GM12878 (cell line): ENCODE measurements at regions of chr5 and their contacts with region 1.

Region 1: GRCh38 chr5:88729084-88729828 is 153.7 kb downstream of the MEF2C start:
- DNase-seq: peak; percentile 73
- ATAC-seq: peak; percentile 46
- H3K4me3 ChIP-seq: no peak overlapping the region
- H3K27ac ChIP-seq: no peak overlapping the region
- H3K4me1 ChIP-seq: peaks cover 34% of the 10 kb centered on the region
- H3K27me3 ChIP-seq: no peaks in the 10 kb centered on the region
- CTCF ChIP-seq: peak; percentile 54 to 77 (median 58); a peak in 5 of 6 replicates
- EP300 ChIP-seq: no peak
- POLR2A ChIP-seq: no peak
- RAD21 ChIP-seq: peak; percentile 85

Region 2: DNA sequence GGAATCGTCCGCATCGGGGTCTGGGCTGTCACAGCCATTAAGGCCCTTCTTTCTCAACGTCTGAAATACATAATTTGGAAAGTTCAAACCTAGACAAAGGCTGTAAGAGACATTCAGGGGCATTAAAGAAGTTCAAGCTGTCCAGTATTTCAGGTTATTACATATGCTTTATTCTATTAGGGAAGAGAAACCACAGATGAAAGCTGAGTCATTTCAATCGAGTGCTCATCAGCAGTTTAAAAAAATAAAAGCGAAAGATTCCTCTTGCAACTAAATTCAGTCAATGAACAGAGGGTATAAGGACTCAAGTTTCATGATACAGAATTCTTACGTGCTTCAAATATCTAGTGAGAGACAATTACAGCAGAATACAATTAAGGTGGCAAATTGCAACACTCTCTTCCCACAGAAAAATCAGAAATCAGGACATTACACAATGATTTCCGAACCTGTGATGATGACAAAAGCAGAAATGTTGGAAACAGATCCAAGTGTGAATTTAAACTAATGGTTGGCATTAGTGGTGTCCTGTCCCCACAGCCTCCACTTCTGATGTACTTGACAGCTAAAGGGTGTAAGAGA is 32.1 kb after region 1 on chr5:
- CTCF ChIA-PET with region 1: interaction called, 9 read pairs
- POLR2A ChIA-PET with region 1: no interaction called
- RAD21 ChIA-PET with region 1: interaction called, 9 read pairs
- SMC1A ChIA-PET with region 1: interaction called, 23 read pairs
- in situ Hi-C with region 1: no loop called
- intact Hi-C with region 1: no loop called
- DNase-seq: no peak
- ATAC-seq: peak; percentile 67
- H3K4me3 ChIP-seq: no peak overlapping the region
- H3K27ac ChIP-seq: peak overlapping the region; percentile 17; the same call in 1 of the 2 replicates
- H3K4me1 ChIP-seq: peaks cover 11% of the 10 kb centered on the region
- H3K27me3 ChIP-seq: no peaks in the 10 kb centered on the region
- CTCF ChIP-seq: no peak
- EP300 ChIP-seq: no peak
- POLR2A ChIP-seq: no peak
- RAD21 ChIP-seq: no peak

Region 3: GRCh38 chr5:88826646-88827585 is 97.7 kb after region 1 on chr5:
- CTCF ChIA-PET with region 1: interaction called, 104 read pairs
- POLR2A ChIA-PET with region 1: interaction called, 13 read pairs
- RAD21 ChIA-PET with region 1: interaction called, 594 read pairs
- SMC1A ChIA-PET with region 1: interaction called, 591 read pairs
- in situ Hi-C with region 1: loop called (anchors 10 kb)
- intact Hi-C with region 1: loop called (anchors 1 kb)
- DNase-seq: peak; percentile 98
- ATAC-seq: peak; percentile 63
- H3K4me3 ChIP-seq: peak overlapping the region; percentile 64; the same call in 1 of the 2 replicates
- H3K27ac ChIP-seq: peak overlapping the region; percentile 80
- H3K4me1 ChIP-seq: peaks cover 23% of the 10 kb centered on the region
- H3K27me3 ChIP-seq: no peaks in the 10 kb centered on the region
- CTCF ChIP-seq: no peak
- EP300 ChIP-seq: peak; percentile 95 to 96
- POLR2A ChIP-seq: peak; percentile 52; the same call in 1 of the 2 replicates
- RAD21 ChIP-seq: no peak

Region 4: DNA sequence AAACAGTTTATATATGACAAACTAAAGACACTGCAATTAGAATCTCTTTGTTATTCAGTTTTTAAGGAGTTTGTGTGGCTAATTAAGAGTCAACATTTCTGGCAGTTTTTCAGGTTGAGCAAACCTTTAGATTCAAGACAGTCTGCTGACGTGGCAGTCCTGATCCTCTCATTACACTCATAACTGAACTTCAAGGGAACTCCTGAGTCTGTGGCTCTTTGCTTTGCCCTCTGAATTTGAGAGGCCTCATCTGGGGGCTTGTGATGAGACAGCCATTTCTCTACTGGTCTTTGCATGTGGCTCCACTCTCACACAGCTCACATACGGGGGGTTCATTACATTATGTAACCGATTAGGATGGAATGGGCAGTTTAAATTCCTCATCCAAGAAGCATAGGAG is 336.7 kb after region 1 on chr5:
- CTCF ChIA-PET with region 1: interaction called, 26 read pairs
- POLR2A ChIA-PET with region 1: interaction called, 4 read pairs
- RAD21 ChIA-PET with region 1: interaction called, 6 read pairs
- SMC1A ChIA-PET with region 1: interaction called, 9 read pairs
- in situ Hi-C with region 1: loop called (anchors 5 kb)
- intact Hi-C with region 1: loop called (anchors 5 kb)
- DNase-seq: peak; percentile 65
- ATAC-seq: peak; percentile 92
- H3K4me3 ChIP-seq: no peak overlapping the region
- H3K27ac ChIP-seq: peak overlapping the region; percentile 83
- H3K4me1 ChIP-seq: peaks cover 10% of the 10 kb centered on the region
- H3K27me3 ChIP-seq: no peaks in the 10 kb centered on the region
- CTCF ChIP-seq: no peak
- EP300 ChIP-seq: peak; percentile 56 to 68; a peak in 2 of 4 replicates
- POLR2A ChIP-seq: 0 out of 2 replicates have a peak, but pooled peaks have one; percentile 19
- RAD21 ChIP-seq: peak; percentile 27; the same call in 1 of the 2 replicates

Region 5: DNA sequence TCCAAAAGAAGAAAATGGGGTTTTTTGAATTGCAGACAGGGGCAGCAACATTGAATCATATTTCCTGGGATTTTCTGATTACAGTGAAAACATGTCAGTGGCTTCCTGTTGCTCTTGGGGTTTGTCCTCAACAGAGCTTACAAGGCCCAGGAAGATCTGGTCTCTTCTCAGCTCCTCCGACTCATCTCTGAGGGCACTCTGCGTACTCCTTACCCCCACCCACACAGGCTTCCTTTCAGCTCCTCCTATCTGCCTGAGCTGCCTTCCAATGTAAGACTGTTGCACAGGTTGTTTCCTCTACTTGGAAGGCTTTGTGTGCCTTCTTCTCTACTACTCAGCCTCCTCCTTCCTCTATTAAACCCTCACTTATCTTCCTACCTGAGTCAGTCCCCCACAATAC is 398.8 kb after region 1 on chr5:
- CTCF ChIA-PET with region 1: no interaction called
- POLR2A ChIA-PET with region 1: no interaction called
- RAD21 ChIA-PET with region 1: no interaction called
- SMC1A ChIA-PET with region 1: no interaction called
- in situ Hi-C with region 1: no loop called
- intact Hi-C with region 1: no loop called
- DNase-seq: no peak
- ATAC-seq: no peak
- H3K4me3 ChIP-seq: no peak overlapping the region
- H3K27ac ChIP-seq: no peak overlapping the region
- H3K4me1 ChIP-seq: no peaks in the 10 kb centered on the region
- H3K27me3 ChIP-seq: no peaks in the 10 kb centered on the region
- CTCF ChIP-seq: no peak
- EP300 ChIP-seq: no peak
- POLR2A ChIP-seq: no peak
- RAD21 ChIP-seq: no peak

Region 6: GRCh38 chr5:89303033-89303480 is 573.8 kb after region 1 on chr5:
- CTCF ChIA-PET with region 1: interaction called, 6 read pairs
- POLR2A ChIA-PET with region 1: no interaction called
- RAD21 ChIA-PET with region 1: interaction called, 6 read pairs
- SMC1A ChIA-PET with region 1: interaction called, 7 read pairs
- in situ Hi-C with region 1: loop called (anchors 5 kb)
- intact Hi-C with region 1: loop called (anchors 2 kb)
- DNase-seq: peak; percentile 84
- ATAC-seq: peak; percentile 75
- H3K4me3 ChIP-seq: peak overlapping the region; percentile 16; the same call in 1 of the 2 replicates
- H3K27ac ChIP-seq: peak overlapping the region; percentile 78
- H3K4me1 ChIP-seq: peaks cover 37% of the 10 kb centered on the region
- H3K27me3 ChIP-seq: no peaks in the 10 kb centered on the region
- CTCF ChIP-seq: no peak
- EP300 ChIP-seq: peak in 1 of 2 experiments; percentile 40; a peak in 1 of 4 replicates
- POLR2A ChIP-seq: no peak
- RAD21 ChIP-seq: no peak; the same call in 1 of the 2 replicates

Region 7: DNA sequence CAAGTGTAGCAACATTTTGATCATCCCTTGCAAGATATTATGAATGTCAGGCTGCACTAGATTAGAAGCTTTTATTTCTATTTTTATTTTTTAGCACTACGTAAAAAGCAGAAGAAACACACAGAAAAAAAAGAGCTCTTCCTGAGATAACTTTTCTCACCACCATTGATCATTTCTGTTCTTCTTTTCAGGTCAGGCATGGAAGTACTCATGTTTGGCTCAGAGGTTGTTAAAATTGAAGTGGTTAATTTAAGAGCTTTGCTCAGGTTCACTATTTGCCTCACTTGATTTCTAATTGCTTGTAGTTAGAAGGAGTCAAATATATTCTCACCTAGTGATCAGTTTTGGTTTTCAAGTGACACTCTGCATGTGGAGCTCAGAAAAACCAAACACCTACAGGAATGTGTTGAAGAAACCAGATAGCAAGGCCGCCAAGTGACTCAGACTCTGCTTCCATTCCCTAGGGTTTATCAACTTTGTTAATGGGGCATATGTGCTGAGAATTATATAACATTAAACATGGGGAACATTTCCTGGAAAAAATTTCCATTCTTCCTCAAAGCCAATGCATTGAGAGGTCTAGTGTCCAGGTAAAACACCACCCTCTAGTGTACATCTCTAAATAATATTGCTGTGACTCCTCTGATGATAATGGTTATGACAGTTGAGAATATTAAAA is 1000.5 kb after region 1 on chr5:
- CTCF ChIA-PET with region 1: interaction called, 114 read pairs
- POLR2A ChIA-PET with region 1: interaction called, 3 read pairs
- RAD21 ChIA-PET with region 1: interaction called, 71 read pairs
- SMC1A ChIA-PET with region 1: interaction called, 77 read pairs
- in situ Hi-C with region 1: no loop called
- intact Hi-C with region 1: loop called (anchors 5 kb)
- DNase-seq: peak; percentile 34
- ATAC-seq: peak; percentile 76
- H3K4me3 ChIP-seq: no peak overlapping the region
- H3K27ac ChIP-seq: no peak overlapping the region
- H3K4me1 ChIP-seq: peaks cover 7% of the 10 kb centered on the region; the same call in 1 of the 2 replicates
- H3K27me3 ChIP-seq: no peaks in the 10 kb centered on the region
- CTCF ChIP-seq: peak; percentile 26 to 54 (median 27); a peak in 4 of 6 replicates
- EP300 ChIP-seq: no peak
- POLR2A ChIP-seq: no peak
- RAD21 ChIP-seq: peak; percentile 65

Region 8: DNA sequence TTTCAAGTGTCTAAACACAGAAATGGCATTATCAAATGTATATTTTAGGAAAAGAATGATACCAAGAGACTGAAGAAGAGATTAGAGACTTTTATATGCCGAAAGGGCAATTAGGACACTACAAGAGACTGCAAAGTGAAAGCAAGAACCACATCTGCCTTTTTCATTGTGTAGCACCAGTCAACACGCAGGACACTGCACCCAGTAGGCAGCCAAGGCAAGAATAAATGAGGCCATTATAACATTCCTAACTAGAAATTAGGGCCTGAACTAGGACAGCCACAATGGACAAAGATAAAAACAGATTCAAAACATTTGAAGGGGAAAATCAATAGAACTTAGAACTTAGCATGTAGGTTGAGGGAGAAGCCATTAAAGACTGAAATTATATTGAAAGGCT is 1669.5 kb after region 1 on chr5:
- CTCF ChIA-PET with region 1: no interaction called
- POLR2A ChIA-PET with region 1: no interaction called
- RAD21 ChIA-PET with region 1: no interaction called
- SMC1A ChIA-PET with region 1: no interaction called
- in situ Hi-C with region 1: no loop called
- intact Hi-C with region 1: loop called (anchors 5 kb)
- DNase-seq: no peak
- ATAC-seq: peak; percentile 44; the same call in 2 of the 3 replicates
- H3K4me3 ChIP-seq: no peak overlapping the region
- H3K27ac ChIP-seq: no peak overlapping the region
- H3K4me1 ChIP-seq: no peaks in the 10 kb centered on the region
- H3K27me3 ChIP-seq: no peaks in the 10 kb centered on the region
- CTCF ChIP-seq: no peak
- EP300 ChIP-seq: no peak
- POLR2A ChIP-seq: no peak
- RAD21 ChIP-seq: no peak